Heart right ventricle (tissue), 16 donors: ENCODE measurements at regions of chr3 and their contacts with region 1.

Region 1: GRCh38 chr3:134357261-134358184 is 16.7 kb downstream of the AMOTL2 start:
- DNase-seq: no peak
- ATAC-seq: peak in 7 of 8 donors; percentile 12 to 58 (median 45)
- H3K4me3 ChIP-seq: no peak overlapping the region
- H3K27ac ChIP-seq: peak overlapping the region in 9 of 10 donors; percentile 53 to 100 (median 68)
- H3K4me1 ChIP-seq: peaks cover 22 to 100% (median 92%) of the 10 kb centered on the region in 9 donors
- H3K27me3 ChIP-seq: no peaks in the 10 kb centered on the region
- CTCF ChIP-seq: no peak

Region 2: GRCh38 chr3:134308350-134308891 is 49.1 kb before region 1 on chr3:
- intact Hi-C with region 1: loop called in 2 of 10 experiments (anchors 5 kb)
- DNase-seq: peak; percentile 76 to 81
- ATAC-seq: peak; percentile 58 to 83 (median 72)
- H3K4me3 ChIP-seq: peak overlapping the region in 6 of 10 donors; percentile 10 to 33 (median 18)
- H3K27ac ChIP-seq: peak overlapping the region in 8 of 10 donors; percentile 50 to 84 (median 76)
- H3K4me1 ChIP-seq: peaks cover 5 to 37% (median 30%) of the 10 kb centered on the region in 9 donors
- H3K27me3 ChIP-seq: peaks cover 0 to 19% (median 0%) of the 10 kb centered on the region in 7 donors
- CTCF ChIP-seq: peak; percentile 97 to 100 (median 99)

Region 3: GRCh38 chr3:134315286-134316106 is 42.0 kb before region 1 on chr3:
- intact Hi-C with region 1: loop called in 4 of 10 experiments (anchors 5 kb)
- DNase-seq: peak; percentile 75
- ATAC-seq: peak; percentile 59 to 78 (median 68)
- H3K4me3 ChIP-seq: no peak overlapping the region
- H3K27ac ChIP-seq: peak overlapping the region; percentile 85 to 97 (median 92)
- H3K4me1 ChIP-seq: peaks cover 11 to 55% (median 47%) of the 10 kb centered on the region in 9 donors
- H3K27me3 ChIP-seq: peaks cover 0 to 28% (median 0%) of the 10 kb centered on the region in 7 donors
- CTCF ChIP-seq: no peak

Region 4: DNA sequence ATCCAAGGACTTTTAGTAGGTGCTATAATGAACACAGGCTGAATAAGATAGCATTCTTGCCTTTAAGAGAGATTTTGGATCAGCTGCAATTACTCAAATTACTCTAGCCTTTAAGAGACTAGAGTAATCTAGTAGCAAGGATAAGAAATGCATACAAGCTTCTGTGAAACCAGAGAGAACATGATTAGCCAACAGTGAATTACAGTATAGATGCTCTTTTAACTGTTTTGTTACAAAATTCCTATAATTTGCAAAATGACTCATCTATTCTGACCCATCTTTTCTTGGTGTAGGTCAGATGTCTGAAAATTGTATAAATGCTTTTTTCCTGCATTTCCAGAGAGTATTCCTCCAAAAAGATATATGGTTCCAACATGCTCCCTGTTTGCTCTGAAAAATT is 195.3 kb after region 1 on chr3:
- intact Hi-C with region 1: no loop called
- DNase-seq: no peak
- ATAC-seq: no peak
- H3K4me3 ChIP-seq: no peak overlapping the region
- H3K27ac ChIP-seq: no peak overlapping the region
- H3K4me1 ChIP-seq: no peaks in the 10 kb centered on the region
- H3K27me3 ChIP-seq: no peaks in the 10 kb centered on the region
- CTCF ChIP-seq: no peak